Sciatic nerve (tissue), 2 donors: ENCODE measurements at regions of chr5 and their contacts with region 1.

Region 1: DNA sequence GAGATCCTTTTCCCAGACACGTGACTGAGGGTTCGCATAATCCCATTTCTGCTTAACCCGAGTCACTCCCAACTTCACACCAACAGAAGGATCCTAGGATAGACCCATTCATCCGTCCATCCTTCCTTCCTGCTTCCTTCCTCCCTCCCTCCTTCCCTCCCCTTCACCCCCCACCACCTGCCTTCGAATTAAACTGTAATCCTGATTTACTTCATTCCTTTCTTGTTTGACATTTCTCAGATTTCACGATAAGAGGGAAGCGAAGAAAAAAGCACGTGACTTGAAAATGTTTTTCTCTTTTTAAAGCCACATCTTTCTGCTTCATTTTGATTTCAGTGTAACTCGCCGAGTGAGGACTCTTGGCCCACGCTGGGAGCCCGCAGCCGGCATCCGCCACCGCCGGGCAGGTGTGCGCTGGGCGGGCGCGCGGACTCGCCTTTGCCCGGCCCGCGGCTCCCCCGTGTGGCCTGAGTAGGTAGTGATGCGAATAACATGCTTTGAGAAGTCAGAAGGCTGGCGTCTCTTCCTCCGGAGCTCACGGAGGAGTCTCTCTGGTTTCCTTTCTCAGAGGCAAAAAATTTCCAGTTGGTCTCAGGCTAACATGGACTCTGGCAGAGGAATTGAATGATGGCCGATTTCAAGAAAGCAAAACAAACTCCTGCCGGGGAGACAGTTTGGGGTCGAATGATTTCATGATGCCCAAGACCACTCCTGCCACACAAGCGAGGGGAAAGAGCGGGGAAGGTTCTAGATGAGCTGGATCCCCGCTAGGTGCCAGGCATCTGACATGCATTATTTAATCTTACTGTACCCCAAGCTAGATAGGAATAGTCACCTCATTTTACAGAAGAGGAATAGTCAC is 117.7 kb downstream of the SLC12A2 start:
- DNase-seq: peak; percentile 92
- ATAC-seq: peak; percentile 80

Region 2: GRCh38 chr5:127564002-127564769 is 637.1 kb before region 1 on chr5:
- intact Hi-C with region 1: loop called (anchors 10 kb)
- DNase-seq: no peak
- ATAC-seq: peak; percentile 80